Naive thymus-derived CD8-positive, alpha-beta T cell (primary cell): ENCODE measurements at regions of chr7 and their contacts with region 1.

Region 1: DNA sequence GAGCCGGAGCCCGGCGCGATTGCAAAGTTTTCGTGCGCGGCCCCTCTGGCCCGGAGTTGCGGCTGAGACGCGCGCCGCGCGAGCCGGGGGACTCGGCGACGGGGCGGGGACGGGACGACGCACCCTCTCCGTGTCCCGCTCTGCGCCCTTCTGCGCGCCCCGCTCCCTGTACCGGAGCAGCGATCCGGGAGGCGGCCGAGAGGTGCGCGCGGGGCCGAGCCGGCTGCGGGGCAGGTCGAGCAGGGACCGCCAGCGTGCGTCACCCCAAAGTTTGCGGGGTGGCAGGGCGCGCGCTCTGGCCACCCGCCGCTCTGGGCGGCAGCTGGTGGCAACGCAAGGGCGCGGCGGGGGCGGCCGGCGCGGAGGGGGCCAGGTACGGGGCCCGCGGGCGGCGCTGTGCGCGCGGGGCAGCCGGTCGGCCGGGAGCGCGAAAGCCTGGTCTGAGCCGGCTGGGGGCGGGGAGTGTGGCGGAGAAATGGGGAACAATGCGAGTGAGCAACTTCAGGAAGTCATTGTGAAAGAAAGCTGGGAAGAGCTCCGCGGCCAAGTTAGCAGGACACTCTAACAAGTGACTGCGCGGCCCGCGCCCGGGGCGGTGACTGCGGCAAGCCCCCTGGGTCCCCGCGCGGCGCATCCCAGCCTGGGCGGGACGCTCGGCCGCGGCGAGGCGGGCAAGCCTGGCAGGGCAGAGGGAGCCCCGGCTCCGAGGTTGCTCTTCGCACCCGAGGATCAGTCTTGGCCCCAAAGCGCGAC is at the start of gene IKZF1:
- DNase-seq: peak in 8 of 10 donors; percentile 51 to 70 (median 61)
- ATAC-seq: peak; percentile 34 to 41
- H3K4me3 Mint-ChIP-seq: peak within 1 kb of the TSS; percentile 88 to 100 (median 100)
- H3K27ac Mint-ChIP-seq: peak within 1 kb of the TSS; percentile 89 to 100 (median 98)
- H3K4me1 Mint-ChIP-seq: peaks cover 31 to 68% (median 54%) of the 10 kb centered on the region in 4 donors
- H3K27me3 Mint-ChIP-seq: no peaks in the 10 kb centered on the region
- polyA plus RNA-seq, gene IKZF1: 145 to 257 (median 209) TPM

Region 2: DNA sequence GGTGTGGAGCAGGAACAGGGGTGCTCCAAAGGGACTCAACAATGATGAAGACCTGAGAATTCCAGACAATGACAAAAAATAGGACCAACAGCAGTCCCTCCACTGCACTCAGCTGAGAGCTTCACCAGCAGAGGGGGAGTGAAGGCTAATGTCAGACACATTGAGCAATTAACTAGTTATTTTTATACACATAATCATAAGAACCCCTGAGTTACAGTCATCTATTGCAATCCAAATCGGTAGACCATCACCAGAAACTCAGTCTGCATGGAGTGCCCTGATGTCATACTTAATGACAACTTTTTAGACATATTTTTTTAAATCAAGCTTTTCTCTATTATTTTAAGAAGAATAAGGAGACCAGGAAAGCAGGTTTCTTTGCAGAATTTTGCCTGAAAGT is 30.5 kb before region 1 on chr7:
- POLR2A ChIA-PET with region 1: interaction called, 295 read pairs
- DNase-seq: no peak
- ATAC-seq: no peak
- H3K4me3 Mint-ChIP-seq: peak overlapping the region in 6 of 10 donors; percentile 6 to 62 (median 37)
- H3K27ac Mint-ChIP-seq: peak overlapping the region in 8 of 10 donors; percentile 42 to 96 (median 74)
- H3K4me1 Mint-ChIP-seq: peaks cover 27 to 88% (median 63%) of the 10 kb centered on the region in 4 donors
- H3K27me3 Mint-ChIP-seq: no peaks in the 10 kb centered on the region

Region 3: GRCh38 chr7:50293509-50294179 is 10.7 kb before region 1 on chr7:
- POLR2A ChIA-PET with region 1: interaction called, 26 read pairs
- DNase-seq: no peak
- ATAC-seq: no peak
- H3K4me3 Mint-ChIP-seq: no peak overlapping the region
- H3K27ac Mint-ChIP-seq: peak overlapping the region in 4 of 10 donors; percentile 22 to 54 (median 32)
- H3K4me1 Mint-ChIP-seq: peaks cover 23 to 53% (median 42%) of the 10 kb centered on the region in 4 donors
- H3K27me3 Mint-ChIP-seq: no peaks in the 10 kb centered on the region

Region 4: GRCh38 chr7:50335795-50336754 is 31.7 kb after region 1 on chr7:
- POLR2A ChIA-PET with region 1: interaction called, 1,553 read pairs
- DNase-seq: peak in 9 of 10 donors; percentile 50 to 88 (median 60)
- ATAC-seq: peak; percentile 9 to 31
- H3K4me3 Mint-ChIP-seq: no peak overlapping the region
- H3K27ac Mint-ChIP-seq: no peak overlapping the region
- H3K4me1 Mint-ChIP-seq: peaks cover 0 to 45% (median 21%) of the 10 kb centered on the region in 4 donors
- H3K27me3 Mint-ChIP-seq: no peaks in the 10 kb centered on the region

Region 5: DNA sequence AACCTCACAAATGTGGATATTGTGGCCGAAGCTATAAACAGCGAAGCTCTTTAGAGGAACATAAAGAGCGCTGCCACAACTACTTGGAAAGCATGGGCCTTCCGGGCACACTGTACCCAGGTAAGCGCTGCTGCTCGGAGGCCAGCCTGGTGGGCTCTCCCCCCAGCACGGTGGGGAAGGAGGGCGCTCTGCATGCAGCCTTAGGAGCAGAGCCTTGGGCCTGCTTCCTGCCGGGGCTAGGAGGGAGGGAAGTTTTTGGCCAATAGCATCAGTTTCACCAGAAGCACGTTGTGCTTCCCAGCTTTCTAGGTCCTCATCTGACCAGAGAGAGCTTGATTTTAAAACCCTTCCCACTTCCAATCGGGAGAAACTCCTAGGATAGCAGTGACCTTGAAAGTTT is 83.0 kb after region 1 on chr7:
- POLR2A ChIA-PET with region 1: no interaction called
- DNase-seq: no peak
- ATAC-seq: no peak
- H3K4me3 Mint-ChIP-seq: no peak overlapping the region
- H3K27ac Mint-ChIP-seq: peak overlapping the region in 8 of 10 donors; percentile 5 to 99 (median 52)
- H3K4me1 Mint-ChIP-seq: peaks cover 48 to 91% (median 80%) of the 10 kb centered on the region in 4 donors
- H3K27me3 Mint-ChIP-seq: no peaks in the 10 kb centered on the region